ENCODE measurements at regions of chrX and their contacts with region 1.

Region 1: DNA sequence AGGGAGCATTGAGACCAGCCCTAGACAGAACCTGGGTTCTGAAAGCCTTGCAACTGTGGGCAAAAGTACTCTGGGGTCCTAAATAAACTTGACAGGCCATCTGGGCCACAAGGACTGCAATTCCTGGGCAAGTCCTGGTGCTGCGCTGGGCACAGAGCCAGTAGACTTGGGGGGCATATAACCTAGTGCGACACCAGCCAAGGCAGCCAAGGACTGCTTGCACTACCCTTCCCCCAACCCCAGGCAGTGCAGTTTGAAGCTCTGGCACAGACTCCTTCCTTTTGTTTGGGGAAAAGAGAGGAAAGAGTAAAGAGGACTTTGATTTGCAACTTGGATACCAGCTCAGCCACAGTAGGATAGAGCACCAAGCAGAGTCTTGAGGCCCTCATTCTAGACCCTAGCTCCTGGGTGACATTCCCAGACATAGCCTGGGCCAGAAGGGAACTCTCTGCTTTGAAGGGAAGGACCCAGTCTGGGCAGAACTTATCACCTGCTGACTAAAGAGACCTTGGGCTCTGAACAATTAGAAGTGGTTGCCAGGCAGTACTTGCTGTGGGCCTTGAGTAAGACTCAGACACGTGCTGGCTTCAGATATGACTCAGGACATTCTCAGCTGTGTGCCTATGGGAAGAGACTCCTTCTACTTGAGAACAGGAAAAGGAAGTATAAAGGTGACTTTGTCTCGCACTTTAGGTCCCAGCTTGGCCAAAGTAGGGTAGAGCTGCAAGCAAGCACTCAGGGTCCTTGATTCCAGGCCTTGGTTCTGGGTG is 522.8 kb downstream of the GLUD2 start:
- ATAC-seq: no peak
- H3K4me3 ChIP-seq: no peak overlapping the region
- H3K27ac ChIP-seq: no peak overlapping the region
- H3K4me1 ChIP-seq: no peaks in the 10 kb centered on the region

Region 2: DNA sequence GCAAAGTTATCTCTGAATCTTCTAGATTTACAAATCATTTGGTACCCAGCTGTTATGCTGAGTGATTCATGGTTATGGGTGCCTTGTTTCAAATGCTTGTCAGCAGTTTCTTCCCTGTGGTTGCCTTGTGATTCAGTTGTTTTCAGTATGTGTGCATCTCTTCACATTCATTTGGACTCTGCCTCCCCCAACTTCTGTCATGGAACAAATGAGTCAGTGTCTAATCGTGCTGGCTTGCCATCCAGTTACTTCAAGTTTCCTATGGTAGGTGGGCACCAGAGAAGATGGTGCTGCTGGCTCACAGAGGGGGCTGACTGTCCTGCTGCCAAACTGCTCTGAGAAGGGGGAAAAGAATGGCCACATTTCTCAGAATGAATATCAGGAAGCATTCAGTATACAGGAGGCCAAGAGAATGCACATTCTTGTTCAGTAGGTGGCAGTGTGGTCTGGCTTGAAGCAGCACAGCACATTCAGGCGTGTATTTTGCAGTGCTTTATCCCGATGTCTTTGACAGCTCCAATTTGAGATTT is 261.9 kb before region 1 on chrX:
- in situ Hi-C with region 1: loop called in 1 of 9 experiments (anchors 25 kb)
- ATAC-seq: peak; percentile 51 to 92 (median 76)
- H3K4me3 ChIP-seq: no peak overlapping the region
- H3K27ac ChIP-seq: no peak overlapping the region
- H3K4me1 ChIP-seq: no peaks in the 10 kb centered on the region

Region 3: GRCh38 chrX:121823411-121823810 is 253.2 kb after region 1 on chrX:
- in situ Hi-C with region 1: no loop called
- ATAC-seq: no peak
- H3K4me3 ChIP-seq: no peak overlapping the region
- H3K27ac ChIP-seq: no peak overlapping the region
- H3K4me1 ChIP-seq: no peaks in the 10 kb centered on the region

Region 4: GRCh38 chrX:122014531-122014930 is 444.3 kb after region 1 on chrX:
- in situ Hi-C with region 1: no loop called
- ATAC-seq: no peak
- H3K4me3 ChIP-seq: no peak overlapping the region
- H3K27ac ChIP-seq: no peak overlapping the region
- H3K4me1 ChIP-seq: no peaks in the 10 kb centered on the region